ENCODE measurements at regions of chr5 and their contacts with region 1.

Region 1: GRCh38 chr5:1344975-1345838 is at the start of gene CLPTM1L:
- DNase-seq: peak; percentile 93
- ATAC-seq: peak; percentile 96
- H3K4me3 Mint-ChIP-seq: peak within 1 kb of the TSS; percentile 94
- H3K27ac Mint-ChIP-seq: peak within 1 kb of the TSS; percentile 92
- H3K4me1 Mint-ChIP-seq: peaks cover 22% of the 10 kb centered on the region
- H3K27me3 Mint-ChIP-seq: no peaks in the 10 kb centered on the region
- total RNA-seq, gene CLPTM1L: 62.1 to 62.2 TPM

Region 2: GRCh38 chr5:1174122-1174936 is 170.9 kb before region 1 on chr5:
- CTCF ChIA-PET with region 1: interaction called, 3 read pairs
- POLR2A ChIA-PET with region 1: no interaction called
- intact Hi-C with region 1: loop called in 1 of 2 experiments (anchors 5 kb)
- DNase-seq: peak; percentile 80
- ATAC-seq: peak; percentile 80
- H3K4me3 Mint-ChIP-seq: no peak overlapping the region
- H3K27ac Mint-ChIP-seq: no peak overlapping the region
- H3K4me1 Mint-ChIP-seq: no peaks in the 10 kb centered on the region
- H3K27me3 Mint-ChIP-seq: no peaks in the 10 kb centered on the region

Region 3: GRCh38 chr5:1294835-1295649 is 50.2 kb before region 1 on chr5 and contains the start of gene TERT:
- CTCF ChIA-PET with region 1: interaction called, 4 read pairs
- POLR2A ChIA-PET with region 1: no interaction called
- intact Hi-C with region 1: loop called in 1 of 2 experiments (anchors 1 kb)
- DNase-seq: peak; percentile 90
- ATAC-seq: peak; percentile 88
- H3K4me3 Mint-ChIP-seq: peak within 1 kb of the TSS; percentile 55
- H3K27ac Mint-ChIP-seq: no peak within 1 kb of the TSS
- H3K4me1 Mint-ChIP-seq: peaks cover 11% of the 10 kb centered on the region
- H3K27me3 Mint-ChIP-seq: no peaks in the 10 kb centered on the region
- total RNA-seq, gene TERT: 8.5 to 11.9 TPM

Region 4: DNA sequence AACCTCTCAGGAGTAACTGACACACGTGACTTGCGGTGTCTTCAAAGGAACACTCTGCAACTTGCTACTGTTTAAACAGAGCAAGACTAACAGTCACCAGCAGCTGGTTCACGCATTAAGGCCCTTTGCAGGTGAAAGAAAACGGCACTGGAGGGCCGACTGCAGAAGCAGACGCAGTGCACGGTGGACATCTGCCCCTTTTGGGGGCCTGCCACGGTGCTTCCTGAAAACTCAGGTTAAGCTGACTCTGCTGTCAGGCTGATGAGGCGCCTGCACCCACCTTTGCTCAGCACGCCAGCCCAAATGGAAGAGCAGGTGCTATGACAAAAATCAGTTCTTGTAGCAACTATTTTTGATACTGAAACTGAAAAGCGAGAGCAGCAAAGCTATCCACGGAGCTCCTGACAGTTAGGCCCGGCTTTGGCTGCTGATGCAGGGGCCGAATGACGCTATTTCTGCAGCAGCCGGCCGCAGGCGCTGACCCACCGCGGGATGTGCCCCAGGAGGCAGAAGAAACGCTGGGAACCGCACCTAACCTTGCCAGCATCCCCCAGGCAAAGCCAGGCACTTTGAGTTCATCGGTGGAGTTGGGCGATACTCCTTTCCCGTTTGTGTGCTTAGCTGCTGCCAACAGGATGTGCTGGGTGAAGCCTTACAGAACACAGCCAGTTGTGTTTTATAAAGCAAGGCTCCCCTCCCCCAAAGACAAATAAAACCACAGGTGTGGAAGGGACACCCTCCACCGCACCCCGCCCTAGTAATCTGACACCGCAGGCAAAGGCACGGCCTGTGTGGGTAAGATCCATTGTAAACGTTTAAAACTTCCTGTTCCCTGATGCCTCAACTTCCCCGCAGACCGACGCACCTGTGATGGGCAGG is 29.3 kb before region 1 on chr5:
- CTCF ChIA-PET with region 1: interaction called, 5 read pairs
- POLR2A ChIA-PET with region 1: no interaction called
- intact Hi-C with region 1: loop called in 1 of 2 experiments (anchors 1 kb)
- DNase-seq: peak; percentile 74
- ATAC-seq: peak; percentile 68
- H3K4me3 Mint-ChIP-seq: peak overlapping the region; percentile 49
- H3K27ac Mint-ChIP-seq: peak overlapping the region; percentile 89
- H3K4me1 Mint-ChIP-seq: peaks cover 61% of the 10 kb centered on the region
- H3K27me3 Mint-ChIP-seq: no peaks in the 10 kb centered on the region

Region 5: GRCh38 chr5:1385395-1386273 is 40.4 kb after region 1 on chr5:
- CTCF ChIA-PET with region 1: interaction called, 4 read pairs
- POLR2A ChIA-PET with region 1: interaction called, 3 read pairs
- intact Hi-C with region 1: loop called in 1 of 2 experiments (anchors 1 kb)
- DNase-seq: peak; percentile 89
- ATAC-seq: peak; percentile 95
- H3K4me3 Mint-ChIP-seq: peak overlapping the region; percentile 87
- H3K27ac Mint-ChIP-seq: peak overlapping the region; percentile 90
- H3K4me1 Mint-ChIP-seq: peaks cover 23% of the 10 kb centered on the region
- H3K27me3 Mint-ChIP-seq: peaks cover 4% of the 10 kb centered on the region

Region 6: DNA sequence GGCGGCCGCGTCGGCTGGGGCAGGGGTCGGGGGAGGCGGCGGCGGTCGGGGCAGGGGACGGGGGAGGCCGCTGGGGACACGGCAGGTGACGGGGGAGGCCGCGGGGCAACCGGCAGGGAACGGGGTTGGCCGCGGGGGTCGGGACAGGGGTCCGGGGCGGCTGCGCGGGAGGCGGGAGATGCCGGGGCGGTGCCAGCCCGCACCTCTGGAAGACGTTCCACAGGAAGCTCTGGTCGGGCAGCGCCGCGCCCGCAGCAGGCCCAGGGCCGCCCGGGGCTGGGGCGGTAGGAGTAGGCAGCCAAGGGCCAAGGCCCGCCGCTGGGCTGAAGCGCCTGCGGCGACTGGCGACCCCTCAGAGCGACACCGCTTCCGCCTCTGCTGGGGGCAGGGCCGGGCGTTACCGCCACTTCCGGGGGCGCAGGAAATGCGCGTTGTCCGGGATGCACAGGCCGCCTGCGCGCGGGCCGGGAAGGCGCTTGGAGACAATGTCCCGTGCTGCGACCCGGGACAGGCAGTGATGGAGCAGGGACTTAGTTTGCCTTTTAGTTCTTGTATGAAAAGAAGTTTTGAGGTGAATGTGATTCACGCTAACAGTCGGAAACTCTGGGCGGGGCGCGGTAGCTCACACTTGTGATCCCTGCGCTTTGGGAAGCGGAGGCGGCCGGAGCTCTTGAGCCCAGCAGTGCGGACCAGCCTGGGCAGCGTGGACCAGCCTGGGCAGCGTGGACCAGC is 288.6 kb after region 1 on chr5:
- CTCF ChIA-PET with region 1: no interaction called
- POLR2A ChIA-PET with region 1: no interaction called
- intact Hi-C with region 1: loop called in 1 of 2 experiments (anchors 1 kb)
- DNase-seq: peak; percentile 85
- ATAC-seq: peak; percentile 90
- H3K4me3 Mint-ChIP-seq: peak overlapping the region; percentile 89
- H3K27ac Mint-ChIP-seq: peak overlapping the region; percentile 95
- H3K4me1 Mint-ChIP-seq: peaks cover 33% of the 10 kb centered on the region
- H3K27me3 Mint-ChIP-seq: no peaks in the 10 kb centered on the region

Region 7: DNA sequence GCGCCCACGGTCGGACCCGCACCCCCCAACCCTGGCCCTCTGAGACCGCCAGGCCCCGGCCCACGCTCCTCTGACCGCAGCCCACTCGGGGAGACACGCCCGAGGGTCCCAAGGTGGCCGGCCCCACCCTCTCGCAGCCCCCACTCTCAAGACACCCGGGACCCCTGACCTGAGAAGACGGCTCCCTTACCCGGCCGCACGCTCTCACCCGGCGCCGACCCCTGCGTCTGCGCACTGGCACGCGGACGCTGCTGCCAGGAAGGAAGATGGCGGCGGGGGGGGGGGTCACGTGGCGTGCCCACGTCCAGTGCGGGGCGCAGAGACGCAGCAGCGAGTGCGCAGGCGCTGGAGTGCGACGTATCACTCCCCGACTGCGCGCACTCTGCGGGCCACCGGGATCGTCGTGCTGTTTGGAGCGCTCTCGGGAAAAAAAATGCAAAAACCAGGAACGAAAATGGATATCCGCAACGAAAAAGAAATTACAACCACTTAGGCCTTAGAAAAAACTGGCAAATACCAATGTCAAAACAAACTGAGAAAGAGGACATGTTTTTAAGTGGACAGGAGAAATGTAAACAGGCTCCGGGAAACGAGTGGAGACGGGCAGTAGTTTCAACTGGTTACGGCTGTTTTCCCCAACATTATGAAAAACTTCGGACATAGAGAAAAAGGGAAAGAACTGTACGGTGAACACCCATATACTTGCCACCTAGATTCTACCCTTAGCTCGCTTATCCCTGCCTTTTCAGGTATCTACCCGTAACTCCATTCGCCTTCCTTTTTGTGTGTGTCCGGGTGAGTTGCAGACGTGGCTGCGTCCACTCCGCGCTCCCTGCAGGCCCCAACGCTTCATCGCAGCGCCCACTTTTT is 454.6 kb after region 1 on chr5 and contains the start of gene MRPL36:
- CTCF ChIA-PET with region 1: no interaction called
- POLR2A ChIA-PET with region 1: no interaction called
- intact Hi-C with region 1: loop called in 1 of 2 experiments (anchors 1 kb)
- DNase-seq: peak; percentile 97
- ATAC-seq: peak; percentile 79
- H3K4me3 Mint-ChIP-seq: peak within 1 kb of the TSS; percentile 94
- H3K27ac Mint-ChIP-seq: peak within 1 kb of the TSS; percentile 97
- H3K4me1 Mint-ChIP-seq: peaks cover 54% of the 10 kb centered on the region
- H3K27me3 Mint-ChIP-seq: no peaks in the 10 kb centered on the region
- total RNA-seq, gene MRPL36: 51.4 to 64.9 TPM